ENCODE measurements at regions of chr9 and their contacts with region 1.

Region 1: GRCh38 chr9:122810306-122810946 is 10.5 kb downstream of the OR1K1 start:
- H3K4me3 ChIP-seq: no peak overlapping the region
- H3K27ac ChIP-seq: no peak overlapping the region
- H3K4me1 ChIP-seq: no peaks in the 10 kb centered on the region
- CTCF ChIP-seq: peak; percentile 62; the same call in 1 of the 2 replicates

Region 2: DNA sequence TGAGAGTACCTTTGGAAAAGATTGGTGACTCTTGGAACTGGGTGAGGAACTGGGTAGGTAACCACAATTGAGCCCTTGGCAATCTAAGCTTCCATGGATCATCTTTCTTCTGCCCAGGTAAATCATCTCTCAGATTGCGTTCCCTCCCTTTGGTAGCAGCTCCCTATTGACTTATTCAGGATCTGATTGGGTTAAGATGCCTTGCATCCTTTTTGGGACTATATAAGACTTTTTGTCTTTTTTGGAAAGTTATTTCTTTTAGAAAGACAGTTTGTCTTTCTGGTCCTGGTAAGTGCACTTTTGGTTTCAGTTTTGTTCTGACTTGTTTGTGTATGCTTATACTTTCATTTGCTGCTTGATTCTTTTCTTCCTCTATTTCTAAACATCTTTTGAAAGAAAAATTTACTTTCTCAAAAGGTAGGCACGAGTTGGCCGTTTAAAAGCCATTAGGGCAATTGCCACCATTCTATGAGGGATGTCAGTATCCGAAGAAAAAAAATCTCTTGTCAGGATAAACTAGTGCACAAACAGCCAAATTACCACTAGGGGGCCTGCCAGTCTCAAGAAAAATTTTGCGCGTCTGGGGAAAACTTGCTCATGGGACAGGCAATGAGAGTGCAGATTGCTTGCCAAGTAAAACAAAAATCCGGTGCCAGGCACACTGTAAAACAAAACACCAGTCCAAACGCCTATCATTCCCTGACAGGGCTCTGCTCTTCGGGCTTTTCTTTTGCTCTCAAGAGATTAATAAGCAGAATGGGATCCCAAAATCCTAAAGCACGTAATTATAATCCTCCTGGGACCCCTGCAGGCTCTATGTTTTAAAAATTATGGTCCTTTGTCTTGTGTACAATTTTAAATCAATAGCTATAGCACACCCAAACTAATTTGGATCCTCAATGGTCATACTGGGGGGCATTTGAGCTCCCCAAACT is 345.5 kb before region 1 on chr9:
- CTCF ChIA-PET with region 1: interaction called, 77 read pairs
- POLR2A ChIA-PET with region 1: no interaction called
- H3K4me3 ChIP-seq: no peak overlapping the region; the same call in 1 of the 2 replicates
- H3K27ac ChIP-seq: no peak overlapping the region
- H3K4me1 ChIP-seq: no peaks in the 10 kb centered on the region
- CTCF ChIP-seq: peak; percentile 36; the same call in 1 of the 2 replicates

Region 3: GRCh38 chr9:122498883-122499288 is 311.5 kb before region 1 on chr9:
- CTCF ChIA-PET with region 1: interaction called, 17 read pairs
- POLR2A ChIA-PET with region 1: no interaction called
- H3K4me3 ChIP-seq: no peak overlapping the region
- H3K27ac ChIP-seq: no peak overlapping the region
- H3K4me1 ChIP-seq: no peaks in the 10 kb centered on the region
- CTCF ChIP-seq: no peak

Region 4: GRCh38 chr9:122821278-122821943 is 11.0 kb after region 1 on chr9:
- CTCF ChIA-PET with region 1: interaction called, 26 read pairs
- POLR2A ChIA-PET with region 1: no interaction called
- H3K4me3 ChIP-seq: no peak overlapping the region
- H3K27ac ChIP-seq: no peak overlapping the region
- H3K4me1 ChIP-seq: peaks cover 8% of the 10 kb centered on the region
- CTCF ChIP-seq: no peak